Body of pancreas (tissue), 4 donors: ENCODE measurements at regions of chr1 and their contacts with region 1.

Region 1: GRCh38 chr1:185813401-185813979 is 79.3 kb downstream of the HMCN1 start:
- DNase-seq: peak in 1 of 4 donors; percentile 31
- ATAC-seq: no peak
- H3K4me3 ChIP-seq: no peak overlapping the region
- H3K27ac ChIP-seq: no peak overlapping the region
- H3K4me1 ChIP-seq: no peaks in the 10 kb centered on the region
- H3K27me3 ChIP-seq: no peaks in the 10 kb centered on the region
- CTCF ChIP-seq: peak in 6 of 7 experiments; percentile 24 to 52 (median 48)
- POLR2A ChIP-seq: no peak

Region 2: GRCh38 chr1:185581961-185582725 is 231.3 kb before region 1 on chr1:
- intact Hi-C with region 1: no loop called
- DNase-seq: no peak
- ATAC-seq: no peak
- H3K4me3 ChIP-seq: no peak overlapping the region
- H3K27ac ChIP-seq: no peak overlapping the region
- H3K4me1 ChIP-seq: no peaks in the 10 kb centered on the region
- H3K27me3 ChIP-seq: no peaks in the 10 kb centered on the region
- CTCF ChIP-seq: no peak
- POLR2A ChIP-seq: no peak

Region 3: GRCh38 chr1:185646202-185646683 is 167.2 kb before region 1 on chr1:
- intact Hi-C with region 1: no loop called
- DNase-seq: peak; percentile 64 to 92 (median 76)
- ATAC-seq: peak; percentile 98
- H3K4me3 ChIP-seq: no peak overlapping the region
- H3K27ac ChIP-seq: peak overlapping the region; percentile 37 to 75 (median 56)
- H3K4me1 ChIP-seq: peaks cover 29% of the 10 kb centered on the region
- H3K27me3 ChIP-seq: no peaks in the 10 kb centered on the region
- CTCF ChIP-seq: no peak
- POLR2A ChIP-seq: peak in 2 of 3 donors; percentile 30 to 50

Region 4: GRCh38 chr1:185960422-185961321 is 147.2 kb after region 1 on chr1:
- intact Hi-C with region 1: no loop called
- DNase-seq: peak; percentile 12 to 28 (median 25)
- ATAC-seq: peak; percentile 47
- H3K4me3 ChIP-seq: no peak overlapping the region
- H3K27ac ChIP-seq: no peak overlapping the region
- H3K4me1 ChIP-seq: no peaks in the 10 kb centered on the region
- H3K27me3 ChIP-seq: no peaks in the 10 kb centered on the region
- CTCF ChIP-seq: no peak
- POLR2A ChIP-seq: no peak

Region 5: DNA sequence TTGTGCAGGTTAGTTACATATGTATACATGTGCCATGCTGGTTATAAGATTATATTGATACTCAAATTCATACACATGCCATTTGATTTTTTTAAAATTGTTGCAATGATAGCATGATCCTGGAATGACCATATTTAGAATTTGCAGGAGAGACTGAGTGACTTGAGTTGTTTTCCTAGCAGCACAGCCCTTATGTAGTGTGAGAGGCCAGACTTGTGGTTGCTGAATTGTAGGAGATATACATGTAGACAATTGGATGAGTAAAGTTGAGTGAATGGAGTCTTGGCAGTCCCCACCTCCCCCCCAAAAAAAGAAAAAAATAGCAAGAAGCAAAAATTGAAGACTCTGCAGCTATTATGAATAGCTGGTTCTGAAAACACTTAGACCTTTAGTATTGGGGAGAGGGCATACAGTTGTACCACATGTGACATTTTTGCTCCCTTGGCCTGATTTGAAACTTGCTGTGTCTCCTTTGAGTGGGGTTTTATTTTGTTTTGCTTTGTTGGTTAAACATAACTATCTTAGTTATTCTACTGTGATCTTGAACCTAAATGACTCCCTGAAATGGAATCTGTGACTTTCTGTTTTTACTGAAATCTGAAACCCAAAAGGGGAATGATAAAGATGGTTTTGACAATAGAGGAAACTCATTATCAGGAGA is 201.0 kb after region 1 on chr1:
- intact Hi-C with region 1: no loop called
- DNase-seq: no peak
- ATAC-seq: no peak
- H3K4me3 ChIP-seq: no peak overlapping the region
- H3K27ac ChIP-seq: no peak overlapping the region
- H3K4me1 ChIP-seq: no peaks in the 10 kb centered on the region
- H3K27me3 ChIP-seq: no peaks in the 10 kb centered on the region
- CTCF ChIP-seq: no peak
- POLR2A ChIP-seq: no peak

Region 6: GRCh38 chr1:186225096-186225495 is 411.6 kb after region 1 on chr1:
- intact Hi-C with region 1: loop called (anchors 10 kb)
- DNase-seq: no peak
- ATAC-seq: no peak
- H3K4me3 ChIP-seq: no peak overlapping the region
- H3K27ac ChIP-seq: no peak overlapping the region
- H3K4me1 ChIP-seq: no peaks in the 10 kb centered on the region
- H3K27me3 ChIP-seq: no peaks in the 10 kb centered on the region
- CTCF ChIP-seq: no peak
- POLR2A ChIP-seq: no peak